Activated CD8-positive, alpha-beta memory T cell treated with anti-CD3 and anti-CD28 coated beads, Interleukin-2, amount 10 ng/mL, durations not matched to agents 7 days and 5 days (primary cell): ENCODE measurements at regions of chr16 and their contacts with region 1.

Region 1: GRCh38 chr16:31458844-31459721 is at the start of gene ARMC5:
- DNase-seq: peak; percentile 99
- ATAC-seq: peak; percentile 73
- H3K4me3 Mint-ChIP-seq: peak within 1 kb of the TSS; percentile 89
- H3K27ac Mint-ChIP-seq: peak within 1 kb of the TSS; percentile 95
- H3K4me1 Mint-ChIP-seq: peaks cover 47% of the 10 kb centered on the region
- H3K27me3 Mint-ChIP-seq: no peaks in the 10 kb centered on the region
- total RNA-seq, gene ARMC5: 19.2 to 22.2 TPM

Region 2: GRCh38 chr16:31476303-31477219 is 17.5 kb after region 1 on chr16:
- CTCF ChIA-PET with region 1: interaction called, 36 read pairs
- DNase-seq: peak; percentile 93
- ATAC-seq: peak; percentile 91
- H3K4me3 Mint-ChIP-seq: peak overlapping the region; percentile 74
- H3K27ac Mint-ChIP-seq: peak overlapping the region; percentile 62
- H3K4me1 Mint-ChIP-seq: peaks cover 17% of the 10 kb centered on the region
- H3K27me3 Mint-ChIP-seq: peaks cover 41% of the 10 kb centered on the region

Region 3: DNA sequence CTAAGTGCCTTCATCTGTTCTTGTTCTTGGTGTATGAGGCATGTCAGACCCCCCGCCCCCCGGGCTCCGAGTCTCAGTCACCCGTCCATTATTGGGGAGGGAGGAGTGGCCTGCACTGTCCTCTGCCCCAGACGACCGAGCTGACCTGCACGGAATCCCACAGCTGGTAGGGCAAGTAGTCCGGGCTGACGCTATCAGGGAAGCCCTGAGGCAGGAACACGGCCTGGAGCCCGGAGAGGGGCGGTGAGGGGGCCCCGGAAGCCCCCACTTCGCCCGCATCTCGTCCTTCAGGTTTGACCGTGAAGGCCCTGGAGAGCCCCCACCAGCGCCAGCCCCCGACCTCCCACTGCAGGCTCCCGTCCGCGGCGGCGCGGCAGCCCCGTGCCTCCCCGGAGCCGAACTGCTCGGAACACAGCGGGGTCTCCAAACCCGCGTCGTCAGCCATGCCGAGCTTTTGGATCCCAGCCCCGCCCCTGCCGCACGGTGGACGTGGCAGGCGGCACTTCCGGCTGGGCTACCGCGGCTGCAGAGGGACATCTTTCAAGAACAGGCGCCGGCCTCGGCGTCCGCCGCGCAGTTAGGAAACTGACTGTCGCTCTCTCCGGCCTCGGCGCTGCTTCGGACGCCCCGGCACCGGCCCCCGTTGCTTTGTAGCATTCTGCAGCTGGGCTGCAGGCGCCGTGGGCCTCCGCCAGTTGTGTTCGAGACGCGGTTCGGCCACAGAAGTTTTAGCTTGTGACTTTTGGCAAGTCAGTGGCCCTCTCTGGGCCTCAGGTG is 49.0 kb after region 1 on chr16 and contains the start of gene RUSF1:
- CTCF ChIA-PET with region 1: interaction called, 18 read pairs
- DNase-seq: peak; percentile 93
- ATAC-seq: peak; percentile 91
- H3K4me3 Mint-ChIP-seq: peak within 1 kb of the TSS; percentile 95
- H3K27ac Mint-ChIP-seq: peak within 1 kb of the TSS; percentile 96
- H3K4me1 Mint-ChIP-seq: peaks cover 43% of the 10 kb centered on the region
- H3K27me3 Mint-ChIP-seq: no peaks in the 10 kb centered on the region
- total RNA-seq, gene RUSF1: 32.8 to 37.7 TPM

Region 4: GRCh38 chr16:31568577-31569359 is 109.7 kb after region 1 on chr16:
- CTCF ChIA-PET with region 1: no interaction called
- DNase-seq: no peak
- ATAC-seq: no peak
- H3K4me3 Mint-ChIP-seq: peak overlapping the region; percentile 10
- H3K27ac Mint-ChIP-seq: no peak overlapping the region
- H3K4me1 Mint-ChIP-seq: peaks cover 3% of the 10 kb centered on the region
- H3K27me3 Mint-ChIP-seq: peaks cover 58% of the 10 kb centered on the region

Region 5: GRCh38 chr16:31868691-31869167 is 409.6 kb after region 1 on chr16:
- CTCF ChIA-PET with region 1: interaction called, 74 read pairs
- DNase-seq: peak; percentile 89
- ATAC-seq: peak; percentile 38
- H3K4me3 Mint-ChIP-seq: peak overlapping the region; percentile 64
- H3K27ac Mint-ChIP-seq: peak overlapping the region; percentile 86
- H3K4me1 Mint-ChIP-seq: peaks cover 53% of the 10 kb centered on the region
- H3K27me3 Mint-ChIP-seq: no peaks in the 10 kb centered on the region

Region 6: DNA sequence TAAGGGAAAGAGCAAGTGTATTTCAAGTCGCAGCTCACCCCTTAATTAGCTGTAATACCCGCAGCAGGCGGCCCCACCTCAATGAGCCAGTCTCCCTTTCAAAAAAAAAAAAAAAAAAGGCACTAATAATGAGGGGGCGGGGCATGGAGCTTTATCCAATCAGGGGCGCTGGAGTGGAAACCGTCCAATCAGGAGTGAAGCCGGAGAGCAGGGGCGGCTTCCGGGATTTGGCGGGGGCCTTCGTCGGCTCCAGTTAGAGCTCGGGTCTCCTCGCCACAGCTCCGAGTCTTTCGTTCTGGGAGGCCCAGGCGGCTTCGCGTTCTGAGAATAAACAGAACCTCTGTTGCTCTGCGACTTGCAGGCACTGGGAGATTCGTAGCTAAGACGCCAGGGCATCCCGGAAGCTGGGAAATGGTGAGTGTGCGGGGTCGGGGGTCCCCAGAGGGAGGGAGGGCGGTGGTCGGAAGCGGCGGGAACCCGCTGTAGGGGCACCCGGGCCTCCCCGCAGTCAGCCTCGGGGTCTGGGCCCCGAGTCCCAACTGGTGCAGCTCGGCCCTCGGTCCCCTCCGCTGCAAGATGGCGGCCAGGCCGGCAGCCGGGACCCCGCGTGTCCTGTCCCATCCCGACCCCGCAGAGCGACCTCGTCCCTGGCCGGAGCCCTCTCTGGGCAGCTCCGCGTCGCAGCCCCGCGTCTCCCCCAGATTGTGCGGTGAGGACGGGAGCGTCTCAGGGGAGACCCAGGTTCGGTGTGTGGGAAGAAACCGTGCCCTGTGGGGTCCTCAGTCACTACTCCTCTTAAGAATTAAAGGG is 414.7 kb after region 1 on chr16 and contains the start of gene ZNF267:
- CTCF ChIA-PET with region 1: interaction called, 74 read pairs
- DNase-seq: peak; percentile 96
- ATAC-seq: peak; percentile 74
- H3K4me3 Mint-ChIP-seq: peak within 1 kb of the TSS; percentile 82
- H3K27ac Mint-ChIP-seq: peak within 1 kb of the TSS; percentile 93
- H3K4me1 Mint-ChIP-seq: peaks cover 81% of the 10 kb centered on the region
- H3K27me3 Mint-ChIP-seq: no peaks in the 10 kb centered on the region
- total RNA-seq, gene ZNF267: 54.1 to 64.1 TPM